ENCODE measurements at regions of chr7 and their contacts with region 1.

Region 1: DNA sequence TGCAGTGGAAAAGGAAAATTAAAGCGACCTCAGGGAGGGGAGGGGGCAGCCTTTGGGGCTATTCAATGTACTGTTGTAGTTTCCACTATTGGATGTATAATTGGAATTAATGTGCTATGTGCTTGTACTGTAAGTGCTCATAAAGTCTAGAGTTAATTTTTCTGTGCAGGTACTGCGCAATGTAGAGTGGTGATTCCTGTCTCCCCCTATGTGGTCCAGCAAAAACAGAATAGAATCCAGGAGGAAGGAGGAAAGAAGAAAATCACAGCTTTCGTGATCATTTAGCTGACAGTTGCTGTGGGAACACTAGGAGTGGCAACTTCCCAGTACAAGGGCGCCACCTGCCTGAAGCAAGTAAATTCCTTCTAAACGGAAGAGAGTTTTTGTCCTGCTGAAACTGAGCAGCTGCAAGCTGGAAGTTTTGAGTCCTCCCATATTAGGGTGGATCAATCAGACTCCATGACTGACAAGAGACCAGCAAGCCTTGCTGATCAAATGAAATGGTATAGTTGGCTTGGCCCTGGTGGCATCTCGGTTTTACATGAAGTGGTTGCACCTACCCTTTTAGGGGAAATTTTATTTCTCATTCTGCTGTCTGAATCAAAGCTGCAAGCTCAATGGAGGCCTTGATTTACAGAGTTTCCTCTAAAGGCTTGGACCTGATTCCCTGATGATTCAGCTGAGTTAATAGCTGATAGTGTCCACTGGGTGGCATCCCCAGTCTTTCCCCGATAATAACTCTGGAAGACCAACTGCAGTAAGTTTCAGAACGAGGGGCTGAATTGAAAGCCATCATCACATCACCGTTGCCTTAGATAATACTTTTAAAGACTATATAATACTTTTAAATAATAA is 299.8 kb downstream of the HGF start:
- DNase-seq: peak; percentile 54
- H3K4me3 ChIP-seq: no peak overlapping the region
- H3K27ac ChIP-seq: no peak overlapping the region
- H3K4me1 ChIP-seq: no peaks in the 10 kb centered on the region
- H3K27me3 ChIP-seq: peaks cover 7% of the 10 kb centered on the region in 2 experiments
- CTCF ChIP-seq: peak; percentile 62 to 70
- POLR2A ChIP-seq: no peak

Region 2: GRCh38 chr7:80428161-80429054 is 1041.7 kb before region 1 on chr7:
- CTCF ChIA-PET with region 1: interaction called, 29 read pairs
- POLR2A ChIA-PET with region 1: no interaction called
- dilution Hi-C with region 1: no loop called
- intact Hi-C with region 1: no loop called
- DNase-seq: peak; percentile 63
- H3K4me3 ChIP-seq: no peak overlapping the region
- H3K27ac ChIP-seq: no peak overlapping the region
- H3K4me1 ChIP-seq: no peaks in the 10 kb centered on the region
- H3K27me3 ChIP-seq: no peaks in the 10 kb centered on the region
- CTCF ChIP-seq: peak; percentile 16 to 32
- POLR2A ChIP-seq: no peak

Region 3: GRCh38 chr7:81457852-81458522 is 12.1 kb before region 1 on chr7:
- CTCF ChIA-PET with region 1: interaction called, 39 read pairs
- POLR2A ChIA-PET with region 1: no interaction called
- dilution Hi-C with region 1: no loop called
- intact Hi-C with region 1: no loop called
- DNase-seq: peak; percentile 10
- H3K4me3 ChIP-seq: no peak overlapping the region
- H3K27ac ChIP-seq: no peak overlapping the region
- H3K4me1 ChIP-seq: no peaks in the 10 kb centered on the region
- H3K27me3 ChIP-seq: peaks cover 8 to 13% of the 10 kb centered on the region in 2 experiments
- CTCF ChIP-seq: peak; percentile 12 to 20
- POLR2A ChIP-seq: no peak

Region 4: DNA sequence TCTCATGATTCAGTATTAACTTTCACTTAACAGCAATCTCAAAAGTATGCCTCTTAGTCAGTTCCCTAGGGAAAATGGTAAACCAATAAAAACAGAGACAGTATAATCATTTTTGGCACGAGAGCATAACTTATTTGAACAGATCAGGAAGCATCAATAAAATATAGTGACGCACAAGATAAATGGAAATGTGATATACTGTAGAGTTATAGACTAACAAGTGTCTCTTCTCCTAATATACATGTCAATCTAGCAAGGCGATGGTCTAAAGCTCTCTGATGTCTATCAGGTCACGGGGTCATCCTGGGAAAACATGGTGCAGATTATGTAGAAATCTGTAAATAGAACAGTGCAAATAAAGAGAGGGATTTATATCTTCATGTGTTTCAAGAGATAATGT is 168.1 kb after region 1 on chr7:
- CTCF ChIA-PET with region 1: no interaction called
- POLR2A ChIA-PET with region 1: no interaction called
- dilution Hi-C with region 1: no loop called
- intact Hi-C with region 1: no loop called
- DNase-seq: peak; percentile 24
- H3K4me3 ChIP-seq: no peak overlapping the region
- H3K27ac ChIP-seq: no peak overlapping the region
- H3K4me1 ChIP-seq: no peaks in the 10 kb centered on the region
- H3K27me3 ChIP-seq: no peaks in the 10 kb centered on the region
- CTCF ChIP-seq: no peak
- POLR2A ChIP-seq: no peak

Region 5: GRCh38 chr7:82729172-82730030 is 1259.3 kb after region 1 on chr7:
- CTCF ChIA-PET with region 1: interaction called, 11 read pairs
- POLR2A ChIA-PET with region 1: no interaction called
- dilution Hi-C with region 1: no loop called
- intact Hi-C with region 1: no loop called
- DNase-seq: peak; percentile 60
- H3K4me3 ChIP-seq: no peak overlapping the region
- H3K27ac ChIP-seq: no peak overlapping the region
- H3K4me1 ChIP-seq: no peaks in the 10 kb centered on the region
- H3K27me3 ChIP-seq: no peaks in the 10 kb centered on the region
- CTCF ChIP-seq: peak; percentile 48 to 62
- POLR2A ChIP-seq: no peak

Measured in endothelial cell of umbilical vein (primary cell).